Naive thymus-derived CD4-positive, alpha-beta T cell (primary cell): ENCODE measurements at regions of chr12 and their contacts with region 1.

Region 1: GRCh38 chr12:6520186-6520585 is 14.1 kb upstream of the GAPDH start:
- DNase-seq: no peak
- ATAC-seq: no peak
- H3K4me3 ChIP-seq: no peak overlapping the region
- H3K4me3 Mint-ChIP-seq: no peak overlapping the region
- H3K27ac ChIP-seq: no peak overlapping the region
- H3K27ac Mint-ChIP-seq: peak overlapping the region in 7 of 9 donors; percentile 9 to 78 (median 29)
- H3K4me1 ChIP-seq: no peaks in the 10 kb centered on the region
- H3K4me1 Mint-ChIP-seq: peaks cover 0 to 7% (median 0%) of the 10 kb centered on the region in 7 donors
- H3K27me3 ChIP-seq: no peaks in the 10 kb centered on the region
- H3K27me3 Mint-ChIP-seq: no peaks in the 10 kb centered on the region

Region 2: DNA sequence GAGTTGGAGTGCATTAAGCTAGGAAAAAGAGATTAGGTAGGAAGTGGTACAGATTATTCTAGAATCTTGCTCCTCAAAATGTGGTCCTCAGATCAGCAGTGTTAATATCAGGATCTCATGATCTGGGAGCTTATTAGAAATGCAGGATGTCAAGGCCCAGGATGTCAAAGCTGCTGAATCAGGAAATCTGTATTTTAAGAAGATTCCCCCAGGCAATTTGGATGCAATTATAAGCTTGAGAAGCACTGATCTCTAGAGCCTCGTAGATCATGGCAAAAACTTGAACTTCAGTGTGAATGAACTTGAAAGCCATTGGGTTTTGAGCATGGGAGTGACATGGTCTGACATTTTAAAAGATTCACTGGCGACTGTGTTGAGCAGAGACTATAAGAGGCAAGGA is 19.7 kb before region 1 on chr12:
- CTCF ChIA-PET with region 1: no interaction called
- POLR2A ChIA-PET with region 1: interaction called, 4 read pairs
- intact Hi-C with region 1: loop called (anchors 1 to 2 kb)
- DNase-seq: no peak
- ATAC-seq: no peak
- H3K4me3 ChIP-seq: no peak overlapping the region
- H3K4me3 Mint-ChIP-seq: no peak overlapping the region
- H3K27ac ChIP-seq: no peak overlapping the region
- H3K27ac Mint-ChIP-seq: no peak overlapping the region
- H3K4me1 ChIP-seq: peaks cover 5% of the 10 kb centered on the region in 2 donors
- H3K4me1 Mint-ChIP-seq: peaks cover under 1 to 21% (median 14%) of the 10 kb centered on the region in 7 donors
- H3K27me3 ChIP-seq: no peaks in the 10 kb centered on the region
- H3K27me3 Mint-ChIP-seq: no peaks in the 10 kb centered on the region